MCF 10A (cell line): ENCODE measurements at regions of chr18 and their contacts with region 1.

Region 1: GRCh38 chr18:57561728-57562423 is 24.6 kb downstream of the FECH start:
- DNase-seq: peak; percentile 58
- H3K4me3 Mint-ChIP-seq: no peak overlapping the region
- H3K27ac Mint-ChIP-seq: no peak overlapping the region
- H3K4me1 Mint-ChIP-seq: peaks cover 6% of the 10 kb centered on the region
- H3K27me3 Mint-ChIP-seq: no peaks in the 10 kb centered on the region
- CTCF ChIP-seq: peak; percentile 75

Region 2: GRCh38 chr18:56702946-56703345 is 858.9 kb before region 1 on chr18:
- CTCF ChIA-PET with region 1: interaction called, 21 read pairs
- POLR2A ChIA-PET with region 1: no interaction called
- intact Hi-C with region 1: no loop called
- DNase-seq: peak; percentile 59
- H3K4me3 Mint-ChIP-seq: no peak overlapping the region
- H3K27ac Mint-ChIP-seq: no peak overlapping the region
- H3K4me1 Mint-ChIP-seq: no peaks in the 10 kb centered on the region
- H3K27me3 Mint-ChIP-seq: no peaks in the 10 kb centered on the region
- CTCF ChIP-seq: peak; percentile 31

Region 3: DNA sequence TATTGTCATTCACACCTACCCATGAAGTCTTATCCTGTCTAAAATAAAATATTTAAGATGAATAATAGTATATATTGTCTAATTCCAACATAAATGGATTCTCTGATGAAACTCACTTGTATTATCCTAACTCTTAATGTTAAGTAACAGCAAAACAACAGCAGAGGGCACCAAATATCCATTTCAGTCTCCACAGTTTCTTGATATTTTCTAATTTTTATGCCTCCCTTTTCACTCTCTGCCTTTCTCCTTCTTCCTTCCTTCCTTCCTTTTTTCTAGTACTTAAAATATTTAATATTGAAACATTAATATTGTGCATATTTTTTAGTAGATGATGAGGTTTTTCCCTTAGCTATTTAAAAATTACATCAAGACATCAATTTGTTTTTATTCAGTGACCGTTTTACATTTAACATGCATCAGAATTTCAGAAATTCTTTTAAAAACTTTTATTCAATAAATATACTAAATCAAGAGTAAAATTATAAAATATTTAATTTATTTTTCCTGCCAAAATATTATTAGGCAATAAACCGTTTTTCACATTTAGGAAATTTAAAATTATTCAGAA is 813.1 kb before region 1 on chr18:
- CTCF ChIA-PET with region 1: interaction called, 46 read pairs
- POLR2A ChIA-PET with region 1: no interaction called
- intact Hi-C with region 1: loop called (anchors 1 kb)
- DNase-seq: peak; percentile 43
- H3K4me3 Mint-ChIP-seq: no peak overlapping the region
- H3K27ac Mint-ChIP-seq: no peak overlapping the region
- H3K4me1 Mint-ChIP-seq: no peaks in the 10 kb centered on the region
- H3K27me3 Mint-ChIP-seq: no peaks in the 10 kb centered on the region
- CTCF ChIP-seq: peak; percentile 60

Region 4: GRCh38 chr18:57915865-57916582 is 354.1 kb after region 1 on chr18:
- CTCF ChIA-PET with region 1: no interaction called
- POLR2A ChIA-PET with region 1: no interaction called
- intact Hi-C with region 1: no loop called
- DNase-seq: no peak
- H3K4me3 Mint-ChIP-seq: no peak overlapping the region
- H3K27ac Mint-ChIP-seq: no peak overlapping the region
- H3K4me1 Mint-ChIP-seq: peaks cover 10% of the 10 kb centered on the region
- H3K27me3 Mint-ChIP-seq: no peaks in the 10 kb centered on the region
- CTCF ChIP-seq: no peak